ENCODE measurements at regions of chr19 and their contacts with region 1.

Region 1: GRCh38 chr19:19138169-19138981 is at the start of gene TMEM161A:
- DNase-seq: peak; percentile 97 to 99 (median 98)
- ATAC-seq: peak; percentile 98
- H3K4me3 ChIP-seq: peak within 1 kb of the TSS; percentile 86
- H3K27ac ChIP-seq: peak within 1 kb of the TSS; percentile 33
- H3K4me1 ChIP-seq: no peaks in the 10 kb centered on the region
- H3K27me3 ChIP-seq: no peaks in the 10 kb centered on the region
- total RNA-seq, gene TMEM161A: 14.0 to 27.0 (median 21.0) TPM

Region 2: DNA sequence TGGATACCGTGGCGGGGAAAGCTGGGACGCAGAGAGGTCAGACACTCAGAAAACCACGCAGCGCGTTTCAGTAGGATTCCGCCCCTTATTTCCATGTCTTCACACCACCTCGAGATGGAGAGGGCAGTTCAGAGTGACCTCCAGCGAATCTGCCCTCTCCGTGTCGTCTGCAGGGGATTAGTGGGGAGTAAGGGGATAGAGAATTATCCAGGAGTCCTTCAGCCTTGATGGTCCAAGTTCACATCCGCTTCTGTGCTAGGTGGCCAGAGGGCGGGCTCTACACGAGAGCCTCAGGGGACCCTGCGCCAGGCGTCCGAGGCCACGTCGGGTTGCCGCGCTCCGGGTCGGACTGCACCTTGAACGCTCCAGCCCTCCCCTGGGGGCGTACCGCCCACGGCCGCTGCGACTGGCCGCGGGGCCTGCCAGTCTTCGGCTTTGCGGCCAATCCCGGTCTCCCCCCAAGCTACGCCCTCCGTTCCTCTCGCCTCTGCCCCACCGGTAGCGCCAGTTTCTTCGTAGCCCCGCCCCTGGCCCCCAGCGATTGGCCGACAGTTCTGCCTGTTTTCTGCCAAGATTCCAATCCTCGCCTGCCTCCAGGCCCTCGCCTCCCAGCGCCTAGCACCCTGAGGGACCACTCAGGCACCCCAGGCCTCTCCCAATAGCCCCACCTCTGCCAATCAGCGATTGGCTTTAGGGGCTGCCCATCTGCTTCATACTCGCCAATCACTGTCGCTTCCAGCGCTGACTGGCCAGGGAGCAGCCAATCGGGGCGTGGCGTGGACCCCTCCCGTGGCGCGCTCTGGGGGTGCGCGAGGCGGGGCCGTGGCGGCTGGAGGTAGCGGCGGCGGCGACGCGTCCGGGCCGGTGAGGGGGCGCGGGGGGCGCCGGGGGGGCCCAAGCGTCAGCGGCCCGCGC is 74.9 kb before region 1 on chr19 and contains the start of gene SLC25A42:
- intact Hi-C with region 1: loop called (anchors 5 to 10 kb)
- DNase-seq: peak; percentile 99 to 100 (median 99)
- ATAC-seq: peak; percentile 97 to 98
- H3K4me3 ChIP-seq: peak within 1 kb of the TSS; percentile 59
- H3K27ac ChIP-seq: peak within 1 kb of the TSS; percentile 95
- H3K4me1 ChIP-seq: peaks cover 3% of the 10 kb centered on the region
- H3K27me3 ChIP-seq: no peaks in the 10 kb centered on the region
- total RNA-seq, gene SLC25A42: 13.4 to 18.7 (median 13.7) TPM

Region 3: DNA sequence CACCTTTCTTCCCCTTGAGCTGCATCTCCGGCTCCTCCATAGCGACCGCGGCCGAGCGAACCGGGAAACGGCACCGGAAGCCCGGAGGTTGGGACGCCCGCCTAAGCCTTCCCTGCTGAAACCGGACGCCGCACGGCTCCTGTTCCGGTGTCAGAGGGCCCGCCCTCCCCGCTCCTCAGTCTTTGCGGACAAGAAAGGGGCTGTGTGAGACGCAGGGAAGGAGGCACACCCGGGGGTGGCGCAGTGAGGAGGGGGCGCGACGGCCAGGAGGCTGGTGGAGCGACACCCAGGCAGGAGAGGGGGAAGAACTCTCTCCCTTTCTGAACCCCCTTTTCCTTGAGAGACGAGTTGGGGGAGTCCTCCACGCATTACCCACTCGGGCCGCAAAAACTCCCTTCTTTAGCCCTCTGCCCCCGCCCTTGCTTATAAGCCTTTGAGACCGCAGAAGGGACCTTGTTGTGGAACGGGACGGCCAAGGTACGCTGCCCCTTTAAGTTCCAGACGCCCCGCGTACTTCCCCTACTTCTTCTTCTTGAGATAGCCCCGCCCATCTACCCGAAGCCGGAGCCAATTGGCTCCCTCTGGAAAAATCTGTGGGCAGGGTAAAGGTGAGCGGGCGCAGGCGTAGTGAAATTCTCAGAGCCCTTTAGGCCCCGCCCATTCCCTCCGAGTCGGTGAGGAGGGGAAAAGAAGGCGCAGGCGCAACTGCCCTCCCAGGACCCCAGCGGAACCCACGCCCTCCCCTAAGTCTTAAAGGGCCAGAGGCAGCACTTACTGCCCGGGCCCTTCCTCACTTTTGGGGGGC is 53.9 kb after region 1 on chr19 and contains the starts of genes BORCS8 and RFXANK:
- intact Hi-C with region 1: no loop called
- DNase-seq: peak; percentile 99
- ATAC-seq: peak; percentile 97 to 98
- H3K4me3 ChIP-seq: peak within 1 kb of the TSS; percentile 91
- H3K27ac ChIP-seq: peak within 1 kb of the TSS; percentile 100
- H3K4me1 ChIP-seq: peaks cover 6% of the 10 kb centered on the region
- H3K27me3 ChIP-seq: no peaks in the 10 kb centered on the region
- total RNA-seq, gene BORCS8: 27.5 to 33.2 (median 31.3) TPM
- total RNA-seq, gene RFXANK: 35.2 to 46.1 (median 44.7) TPM